ENCODE measurements at regions of chr13 and their contacts with region 1.

Region 1: GRCh38 chr13:33262062-33262497 is 23.5 kb downstream of the STARD13 start:
- DNase-seq: peak; percentile 88
- ATAC-seq: peak; percentile 86
- H3K4me3 ChIP-seq: peak overlapping the region in 2 of 3 experiments; percentile 8 to 34; a peak in 2 of 6 replicates
- H3K27ac ChIP-seq: peak overlapping the region; percentile 94
- H3K4me1 ChIP-seq: peaks cover 92% of the 10 kb centered on the region
- H3K27me3 ChIP-seq: no peaks in the 10 kb centered on the region
- CTCF ChIP-seq: peak; percentile 54
- EP300 ChIP-seq: no peak
- POLR2A ChIP-seq: peak; percentile 25 to 35; a peak in 1 of 4 replicates
- RAD21 ChIP-seq: no peak

Region 2: GRCh38 chr13:33125821-33126570 is 136.1 kb before region 1 on chr13:
- CTCF ChIA-PET with region 1: no interaction called
- POLR2A ChIA-PET with region 1: interaction called, 6 read pairs
- in situ Hi-C with region 1: no loop called
- intact Hi-C with region 1: loop called (anchors 2 kb)
- DNase-seq: peak; percentile 99
- ATAC-seq: peak; percentile 100
- H3K4me3 ChIP-seq: peak overlapping the region in 1 of 3 experiments; percentile 18; a peak in 1 of 6 replicates
- H3K27ac ChIP-seq: peak overlapping the region; percentile 94
- H3K4me1 ChIP-seq: peaks cover 57% of the 10 kb centered on the region
- H3K27me3 ChIP-seq: no peaks in the 10 kb centered on the region
- CTCF ChIP-seq: 0 out of 2 replicates have a peak, but pooled peaks have one; percentile 4
- EP300 ChIP-seq: peak; percentile 69 to 94
- POLR2A ChIP-seq: no peak
- RAD21 ChIP-seq: peak; percentile 35; the same call in 1 of the 2 replicates

Region 3: DNA sequence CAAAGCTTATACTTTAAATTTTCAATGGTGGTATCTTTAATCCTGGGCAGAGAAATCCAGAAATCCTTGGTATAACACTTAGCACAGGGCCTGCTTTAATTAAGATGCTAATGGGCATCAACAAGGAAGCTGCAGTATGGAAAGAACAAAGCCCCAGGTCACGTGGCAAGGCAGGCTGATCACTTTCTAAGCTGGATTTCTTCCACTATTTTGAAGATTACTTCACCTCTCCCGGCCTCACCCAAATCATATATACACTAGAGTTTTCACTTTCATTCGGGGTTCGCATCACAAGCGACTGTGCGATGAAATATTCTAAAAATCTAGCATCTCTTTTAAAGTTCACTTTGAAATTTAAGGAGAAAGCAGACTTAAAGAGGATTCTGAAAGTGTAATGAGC is 48.3 kb before region 1 on chr13:
- CTCF ChIA-PET with region 1: no interaction called
- POLR2A ChIA-PET with region 1: no interaction called
- in situ Hi-C with region 1: no loop called
- intact Hi-C with region 1: no loop called
- DNase-seq: no peak
- ATAC-seq: no peak
- H3K4me3 ChIP-seq: no peak overlapping the region
- H3K27ac ChIP-seq: no peak overlapping the region
- H3K4me1 ChIP-seq: peaks cover 45% of the 10 kb centered on the region
- H3K27me3 ChIP-seq: no peaks in the 10 kb centered on the region
- CTCF ChIP-seq: no peak
- EP300 ChIP-seq: no peak
- POLR2A ChIP-seq: no peak
- RAD21 ChIP-seq: no peak

Region 4: GRCh38 chr13:33228648-33229445 is 33.2 kb before region 1 on chr13:
- CTCF ChIA-PET with region 1: no interaction called
- POLR2A ChIA-PET with region 1: interaction called, 64 read pairs
- in situ Hi-C with region 1: no loop called
- intact Hi-C with region 1: loop called (anchors 1 kb)
- DNase-seq: peak; percentile 62
- ATAC-seq: peak; percentile 57
- H3K4me3 ChIP-seq: peak overlapping the region; percentile 2 to 52 (median 5); a peak in 3 of 6 replicates
- H3K27ac ChIP-seq: peak overlapping the region; percentile 96
- H3K4me1 ChIP-seq: peaks cover 55% of the 10 kb centered on the region
- H3K27me3 ChIP-seq: no peaks in the 10 kb centered on the region
- CTCF ChIP-seq: peak; percentile 76
- EP300 ChIP-seq: no peak
- POLR2A ChIP-seq: no peak
- RAD21 ChIP-seq: peak; percentile 80

Region 5: GRCh38 chr13:33285420-33286124 is 23.5 kb after region 1 on chr13 and contains the start of gene STARD13:
- CTCF ChIA-PET with region 1: no interaction called
- POLR2A ChIA-PET with region 1: interaction called, 26 read pairs
- in situ Hi-C with region 1: no loop called
- intact Hi-C with region 1: loop called (anchors 1 kb)
- DNase-seq: peak; percentile 92
- ATAC-seq: peak; percentile 99
- H3K4me3 ChIP-seq: peak within 1 kb of the TSS; percentile 84 to 96 (median 86)
- H3K27ac ChIP-seq: peak within 1 kb of the TSS; percentile 85
- H3K4me1 ChIP-seq: peaks cover 41% of the 10 kb centered on the region
- H3K27me3 ChIP-seq: peaks cover 0 to 5% of the 10 kb centered on the region in 2 experiments; a peak in 1 of 5 replicates
- CTCF ChIP-seq: peak; percentile 57
- EP300 ChIP-seq: no peak
- POLR2A ChIP-seq: peak; percentile 76 to 81
- RAD21 ChIP-seq: no peak
- total RNA-seq, gene STARD13: 13.8 and 14.3 TPM in 2 replicates

Region 6: DNA sequence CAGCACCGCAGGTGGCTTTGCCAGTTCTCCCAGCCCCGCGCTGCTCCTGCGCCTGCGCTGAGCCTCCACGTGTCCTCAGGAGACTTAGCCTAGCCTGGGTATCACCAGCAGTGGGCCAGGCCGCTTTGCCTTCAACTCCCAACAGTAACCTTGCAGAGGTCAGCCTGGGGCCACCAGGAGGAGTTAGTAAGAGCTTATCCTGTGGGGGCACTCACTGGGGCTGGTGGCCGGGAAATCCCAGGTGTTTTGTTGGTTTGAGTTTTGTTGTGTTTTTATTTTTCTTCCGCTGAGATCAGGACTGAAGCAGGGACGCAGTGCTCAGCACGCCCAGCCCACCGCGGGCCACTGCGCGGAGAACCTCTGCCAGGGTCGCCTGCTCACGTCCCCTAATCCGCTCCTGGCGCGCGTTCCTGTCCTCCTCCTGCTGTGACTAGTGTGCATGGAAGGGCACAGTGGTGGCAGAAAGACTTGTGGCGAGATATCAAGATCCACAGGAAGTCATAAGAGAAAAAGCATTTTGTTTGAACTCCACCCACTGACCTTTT is 348.5 kb after region 1 on chr13:
- CTCF ChIA-PET with region 1: no interaction called
- POLR2A ChIA-PET with region 1: no interaction called
- in situ Hi-C with region 1: no loop called
- intact Hi-C with region 1: loop called (anchors 2 kb)
- DNase-seq: peak; percentile 95
- ATAC-seq: peak; percentile 94
- H3K4me3 ChIP-seq: peak overlapping the region; percentile 55 to 70 (median 59)
- H3K27ac ChIP-seq: peak overlapping the region; percentile 99
- H3K4me1 ChIP-seq: peaks cover 62% of the 10 kb centered on the region
- H3K27me3 ChIP-seq: no peaks in the 10 kb centered on the region
- CTCF ChIP-seq: peak; percentile 58
- EP300 ChIP-seq: no peak
- POLR2A ChIP-seq: peak; percentile 66 to 72
- RAD21 ChIP-seq: peak; percentile 52

Measured in HepG2 (cell line).